HEK293 (cell line): ENCODE measurements at regions of chr17 and their contacts with region 1.

Region 1: GRCh38 chr17:49556223-49556971 is 19.3 kb upstream of the NXPH3 start:
- H3K4me3 ChIP-seq: no peak overlapping the region
- H3K27ac ChIP-seq: peak overlapping the region; percentile 12; the same call in 1 of the 2 replicates
- H3K4me1 ChIP-seq: 0 out of 2 replicates have a peak, but pooled peaks cover 2% of the 10 kb centered on the region
- CTCF ChIP-seq: peak; percentile 97

Region 2: GRCh38 chr17:49063652-49064051 is 492.7 kb before region 1 on chr17:
- CTCF ChIA-PET with region 1: no interaction called
- POLR2A ChIA-PET with region 1: no interaction called
- H3K4me3 ChIP-seq: no peak overlapping the region
- H3K27ac ChIP-seq: no peak overlapping the region
- H3K4me1 ChIP-seq: peaks cover 6% of the 10 kb centered on the region
- CTCF ChIP-seq: no peak

Region 3: GRCh38 chr17:49390548-49391324 is 165.7 kb before region 1 on chr17:
- CTCF ChIA-PET with region 1: interaction called, 11 read pairs
- POLR2A ChIA-PET with region 1: no interaction called
- H3K4me3 ChIP-seq: no peak overlapping the region
- H3K27ac ChIP-seq: peak overlapping the region; percentile 24
- H3K4me1 ChIP-seq: peaks cover 13% of the 10 kb centered on the region
- CTCF ChIP-seq: no peak

Region 4: GRCh38 chr17:49425004-49425286 is 131.5 kb before region 1 on chr17:
- CTCF ChIA-PET with region 1: interaction called, 303 read pairs
- POLR2A ChIA-PET with region 1: no interaction called
- H3K4me3 ChIP-seq: no peak overlapping the region
- H3K27ac ChIP-seq: no peak overlapping the region
- H3K4me1 ChIP-seq: no peaks in the 10 kb centered on the region
- CTCF ChIP-seq: no peak

Region 5: DNA sequence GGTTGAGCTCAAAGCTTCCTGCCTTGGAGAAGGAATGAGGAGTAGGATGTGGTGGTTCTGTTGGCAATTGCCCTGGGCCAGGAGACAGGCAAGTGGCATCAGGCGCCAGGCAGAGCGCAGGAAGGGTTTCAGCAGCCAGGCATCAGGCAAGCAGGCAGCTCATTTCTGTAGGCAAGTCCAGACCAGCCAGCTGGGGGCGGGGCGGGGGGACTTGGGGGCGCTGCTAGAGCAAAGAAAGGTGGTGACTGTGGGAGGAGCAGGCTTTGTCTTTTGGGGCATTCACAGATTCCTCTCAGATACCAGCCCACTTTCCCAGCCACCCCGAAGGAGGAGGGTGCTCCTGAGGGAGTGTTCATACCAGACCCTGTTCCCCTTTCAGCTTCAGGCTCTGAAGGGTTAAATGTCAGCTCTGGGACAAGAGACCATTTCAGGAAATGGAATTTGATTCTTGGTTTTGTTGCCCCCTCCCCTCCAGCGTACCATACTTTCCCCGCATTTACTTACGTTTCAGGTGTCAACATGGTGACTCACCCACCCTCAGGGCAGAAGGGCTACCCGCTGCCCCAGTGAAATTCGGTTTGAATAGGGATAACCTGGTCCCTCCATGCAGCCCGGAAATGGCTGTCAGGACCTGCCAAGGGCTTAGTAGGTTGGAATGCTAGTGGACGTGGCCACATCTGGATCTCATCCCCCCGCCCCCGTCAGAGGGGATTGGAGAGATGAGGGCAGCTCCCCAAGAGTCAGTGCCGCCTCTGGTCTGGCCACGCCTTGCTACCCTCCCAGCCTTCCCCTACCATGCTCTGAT is 48.1 kb before region 1 on chr17:
- CTCF ChIA-PET with region 1: interaction called, 42 read pairs
- POLR2A ChIA-PET with region 1: no interaction called
- H3K4me3 ChIP-seq: peak overlapping the region; percentile 4; the same call in 1 of the 2 replicates
- H3K27ac ChIP-seq: no peak overlapping the region
- H3K4me1 ChIP-seq: peaks cover 10% of the 10 kb centered on the region
- CTCF ChIP-seq: no peak

Region 6: GRCh38 chr17:49567871-49568694 is 11.7 kb after region 1 on chr17:
- CTCF ChIA-PET with region 1: interaction called, 114 read pairs
- POLR2A ChIA-PET with region 1: no interaction called
- H3K4me3 ChIP-seq: no peak overlapping the region
- H3K27ac ChIP-seq: no peak overlapping the region
- H3K4me1 ChIP-seq: peaks cover 3% of the 10 kb centered on the region
- CTCF ChIP-seq: peak; percentile 97

Region 7: DNA sequence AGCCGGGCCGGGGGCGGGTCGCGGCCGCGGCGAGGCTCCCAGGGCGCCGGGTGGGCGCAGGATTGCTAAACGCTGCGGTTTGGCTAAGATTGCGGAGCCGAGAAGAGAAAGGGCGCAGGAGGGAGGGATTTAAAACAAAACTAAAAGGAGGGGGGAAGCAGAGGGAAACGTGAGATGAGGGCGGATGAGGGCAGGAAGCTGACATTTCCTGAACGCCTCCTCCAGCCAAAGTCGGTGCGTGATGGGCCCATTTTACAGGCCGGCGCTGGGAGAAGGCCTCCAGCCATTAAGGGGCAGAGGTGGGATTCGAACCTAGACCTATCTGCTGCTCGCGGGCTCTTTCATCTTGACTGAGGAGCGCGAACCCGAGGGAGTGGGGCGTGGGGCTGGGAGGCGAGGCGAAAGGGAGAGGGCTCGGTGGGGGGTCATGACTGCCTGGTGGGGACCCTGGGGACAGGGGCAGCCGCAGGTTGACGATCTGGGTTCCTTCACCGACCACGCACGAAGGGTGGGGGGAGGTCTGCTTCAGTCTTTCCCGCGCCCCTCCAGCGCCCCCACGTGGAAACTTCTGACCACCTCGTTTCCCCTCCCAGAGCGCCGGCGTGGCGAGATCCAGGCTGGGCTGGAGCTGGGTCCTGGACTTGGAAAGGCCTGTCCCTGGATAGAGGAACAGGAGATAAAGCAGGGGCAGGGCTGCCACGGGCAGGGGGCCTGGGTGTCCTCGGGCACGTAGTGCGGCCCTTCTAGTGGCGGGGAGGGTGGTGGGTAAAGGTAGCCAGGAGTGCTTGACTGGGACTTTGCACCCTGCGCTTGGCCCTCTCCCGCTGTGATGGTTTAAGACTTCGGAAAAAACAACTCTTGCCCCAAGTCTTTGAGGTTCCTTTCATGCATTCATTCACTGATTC is 295.2 kb after region 1 on chr17:
- CTCF ChIA-PET with region 1: interaction called, 12 read pairs
- POLR2A ChIA-PET with region 1: no interaction called
- H3K4me3 ChIP-seq: peak overlapping the region; percentile 27
- H3K27ac ChIP-seq: peak overlapping the region; percentile 12; the same call in 1 of the 2 replicates
- H3K4me1 ChIP-seq: peaks cover 5% of the 10 kb centered on the region; the same call in 1 of the 2 replicates
- CTCF ChIP-seq: peak; percentile 85